Naive thymus-derived CD4-positive, alpha-beta T cell (primary cell): ENCODE measurements at regions of chr19 and their contacts with region 1.

Region 1: GRCh38 chr19:54325194-54325621 is 12.2 kb upstream of the LILRA5 start:
- DNase-seq: peak in 8 of 9 donors; percentile 35 to 74 (median 62)
- ATAC-seq: peak; percentile 83
- H3K4me3 ChIP-seq: no peak overlapping the region
- H3K4me3 Mint-ChIP-seq: no peak overlapping the region
- H3K27ac ChIP-seq: no peak overlapping the region
- H3K27ac Mint-ChIP-seq: no peak overlapping the region
- H3K4me1 ChIP-seq: peaks cover 0 to 7% of the 10 kb centered on the region in 2 donors
- H3K4me1 Mint-ChIP-seq: peaks cover 4 to 21% (median 14%) of the 10 kb centered on the region in 7 donors
- H3K27me3 ChIP-seq: no peaks in the 10 kb centered on the region
- H3K27me3 Mint-ChIP-seq: peaks cover 4 to 23% (median 7%) of the 10 kb centered on the region in 5 donors

Region 2: GRCh38 chr19:53246498-53246897 is 1078.7 kb before region 1 on chr19:
- CTCF ChIA-PET with region 1: no interaction called
- POLR2A ChIA-PET with region 1: no interaction called
- intact Hi-C with region 1: no loop called
- DNase-seq: no peak
- ATAC-seq: no peak
- H3K4me3 ChIP-seq: no peak overlapping the region
- H3K4me3 Mint-ChIP-seq: no peak overlapping the region
- H3K27ac ChIP-seq: no peak overlapping the region
- H3K27ac Mint-ChIP-seq: no peak overlapping the region
- H3K4me1 ChIP-seq: no peaks in the 10 kb centered on the region
- H3K4me1 Mint-ChIP-seq: peaks cover 0 to 1% (median 0%) of the 10 kb centered on the region in 7 donors
- H3K27me3 ChIP-seq: no peaks in the 10 kb centered on the region
- H3K27me3 Mint-ChIP-seq: peaks cover 0 to 5% (median 0%) of the 10 kb centered on the region in 5 donors

Region 3: GRCh38 chr19:54189735-54190502 is 135.3 kb before region 1 on chr19:
- CTCF ChIA-PET with region 1: no interaction called
- POLR2A ChIA-PET with region 1: no interaction called
- intact Hi-C with region 1: no loop called
- DNase-seq: peak; percentile 98 to 100 (median 100)
- ATAC-seq: peak; percentile 73
- H3K4me3 ChIP-seq: peak overlapping the region; percentile 81
- H3K4me3 Mint-ChIP-seq: peak overlapping the region; percentile 90 to 100 (median 93)
- H3K27ac ChIP-seq: peak overlapping the region; percentile 99
- H3K27ac Mint-ChIP-seq: peak overlapping the region; percentile 97 to 100 (median 99)
- H3K4me1 ChIP-seq: peaks cover 20 to 22% of the 10 kb centered on the region in 2 donors
- H3K4me1 Mint-ChIP-seq: peaks cover 15 to 47% (median 39%) of the 10 kb centered on the region in 7 donors
- H3K27me3 ChIP-seq: no peaks in the 10 kb centered on the region
- H3K27me3 Mint-ChIP-seq: peaks cover 0 to 2% (median 0%) of the 10 kb centered on the region in 5 donors

Region 4: GRCh38 chr19:54352546-54352945 is 27.3 kb after region 1 on chr19:
- CTCF ChIA-PET with region 1: interaction called, 6 read pairs
- POLR2A ChIA-PET with region 1: no interaction called
- intact Hi-C with region 1: loop called in 1 of 2 experiments (anchors 1 kb)
- DNase-seq: no peak
- ATAC-seq: no peak
- H3K4me3 ChIP-seq: no peak overlapping the region
- H3K4me3 Mint-ChIP-seq: no peak overlapping the region
- H3K27ac ChIP-seq: peak overlapping the region; percentile 24
- H3K27ac Mint-ChIP-seq: peak overlapping the region in 7 of 9 donors; percentile 15 to 87 (median 74)
- H3K4me1 ChIP-seq: no peaks in the 10 kb centered on the region
- H3K4me1 Mint-ChIP-seq: peaks cover 3 to 24% (median 17%) of the 10 kb centered on the region in 7 donors
- H3K27me3 ChIP-seq: no peaks in the 10 kb centered on the region
- H3K27me3 Mint-ChIP-seq: peaks cover 0 to 23% (median 0%) of the 10 kb centered on the region in 5 donors

Region 5: GRCh38 chr19:54439174-54439853 is 114.1 kb after region 1 on chr19:
- CTCF ChIA-PET with region 1: no interaction called
- POLR2A ChIA-PET with region 1: no interaction called
- intact Hi-C with region 1: loop called in 1 of 2 experiments (anchors 5 kb)
- DNase-seq: no peak
- ATAC-seq: peak; percentile 62
- H3K4me3 ChIP-seq: no peak overlapping the region
- H3K4me3 Mint-ChIP-seq: no peak overlapping the region
- H3K27ac ChIP-seq: no peak overlapping the region
- H3K27ac Mint-ChIP-seq: peak overlapping the region in 2 of 9 donors; percentile 42 to 59
- H3K4me1 ChIP-seq: peaks cover 0 to 5% of the 10 kb centered on the region in 2 donors
- H3K4me1 Mint-ChIP-seq: peaks cover 15 to 41% (median 23%) of the 10 kb centered on the region in 7 donors
- H3K27me3 ChIP-seq: no peaks in the 10 kb centered on the region
- H3K27me3 Mint-ChIP-seq: no peaks in the 10 kb centered on the region

Region 6: DNA sequence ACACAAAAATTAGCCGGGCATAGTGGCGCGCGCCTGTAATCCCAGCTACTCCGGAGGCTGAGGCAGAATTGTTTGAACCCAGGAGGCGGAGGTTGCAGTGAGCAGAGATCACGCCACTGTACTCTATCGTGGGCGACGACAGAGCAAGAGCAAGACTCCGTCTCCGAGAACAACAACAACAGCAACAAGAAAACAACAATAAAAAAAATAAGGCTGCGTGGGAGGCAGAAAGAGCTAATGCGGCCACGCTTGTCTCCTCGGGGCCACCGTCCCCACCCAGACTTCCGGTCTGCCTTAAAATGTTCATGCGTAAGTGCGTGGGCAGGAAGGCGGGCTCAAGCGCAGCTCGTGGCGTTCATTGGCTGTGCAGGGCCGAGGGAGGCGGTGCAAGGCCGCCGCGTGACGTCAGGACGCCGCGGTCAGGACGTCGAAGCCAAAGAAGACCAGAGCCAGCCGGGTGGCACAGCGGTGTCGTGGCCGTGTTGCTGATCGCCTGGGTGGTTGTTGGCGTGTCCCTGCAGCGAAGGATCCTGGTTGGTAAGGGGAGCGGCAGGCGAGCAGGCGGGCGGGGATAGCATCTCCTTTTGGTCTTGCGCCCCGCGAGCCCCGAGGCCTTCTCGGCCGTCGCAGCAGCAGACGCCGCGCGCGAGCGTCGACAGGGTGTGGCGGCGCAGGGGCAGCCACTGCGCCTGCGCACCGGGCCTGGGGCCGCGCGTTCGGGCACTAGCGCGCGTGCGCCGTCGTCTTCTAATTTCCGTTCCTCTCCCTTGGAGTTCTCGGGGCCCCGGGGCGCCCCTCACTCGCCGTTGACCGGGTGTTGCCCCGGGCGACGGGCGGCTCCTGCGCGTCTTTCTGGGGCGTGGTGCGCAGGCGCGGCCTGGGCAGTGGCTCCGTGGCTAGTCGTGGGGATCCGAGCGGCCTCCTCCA is 123.8 kb after region 1 on chr19 and contains the start of gene LENG8:
- CTCF ChIA-PET with region 1: no interaction called
- POLR2A ChIA-PET with region 1: interaction called, 3 read pairs
- intact Hi-C with region 1: loop called in 1 of 2 experiments (anchors 5 kb)
- DNase-seq: peak; percentile 95 to 99 (median 98)
- ATAC-seq: peak; percentile 94
- H3K4me3 ChIP-seq: peak within 1 kb of the TSS; percentile 85
- H3K4me3 Mint-ChIP-seq: peak within 1 kb of the TSS; percentile 93 to 99 (median 97)
- H3K27ac ChIP-seq: peak within 1 kb of the TSS; percentile 94
- H3K27ac Mint-ChIP-seq: peak within 1 kb of the TSS; percentile 97 to 100 (median 100)
- H3K4me1 ChIP-seq: peaks cover 19 to 39% of the 10 kb centered on the region in 2 donors
- H3K4me1 Mint-ChIP-seq: peaks cover 31 to 61% (median 54%) of the 10 kb centered on the region in 7 donors
- H3K27me3 ChIP-seq: no peaks in the 10 kb centered on the region
- H3K27me3 Mint-ChIP-seq: peaks cover 0 to 3% (median 0%) of the 10 kb centered on the region in 5 donors
- total RNA-seq, gene LENG8: 238 to 685 (median 503) TPM